ENCODE measurements at regions of chr10 and their contacts with region 1.

Region 1: GRCh38 chr10:1061930-1062774 is 6.0 kb downstream of the WDR37 start:
- DNase-seq: no peak
- H3K4me3 ChIP-seq: no peak overlapping the region
- H3K27ac ChIP-seq: no peak overlapping the region
- H3K4me1 ChIP-seq: peaks cover 7 to 17% of the 10 kb centered on the region in 2 donors
- H3K27me3 ChIP-seq: no peaks in the 10 kb centered on the region
- CTCF ChIP-seq: no peak
- POLR2A ChIP-seq: no peak

Region 2: GRCh38 chr10:844552-844951 is 217.6 kb before region 1 on chr10:
- intact Hi-C with region 1: no loop called
- DNase-seq: no peak
- H3K4me3 ChIP-seq: no peak overlapping the region
- H3K27ac ChIP-seq: peak overlapping the region in 2 of 3 donors; percentile 22 to 57
- H3K4me1 ChIP-seq: peaks cover 28 to 43% of the 10 kb centered on the region in 2 donors
- H3K27me3 ChIP-seq: no peaks in the 10 kb centered on the region
- CTCF ChIP-seq: no peak
- POLR2A ChIP-seq: no peak

Region 3: GRCh38 chr10:995559-995926 is 66.6 kb before region 1 on chr10:
- intact Hi-C with region 1: loop called (anchors 5 kb)
- DNase-seq: no peak
- H3K4me3 ChIP-seq: no peak overlapping the region
- H3K27ac ChIP-seq: no peak overlapping the region
- H3K4me1 ChIP-seq: no peaks in the 10 kb centered on the region
- H3K27me3 ChIP-seq: no peaks in the 10 kb centered on the region
- CTCF ChIP-seq: no peak
- POLR2A ChIP-seq: no peak

Region 4: DNA sequence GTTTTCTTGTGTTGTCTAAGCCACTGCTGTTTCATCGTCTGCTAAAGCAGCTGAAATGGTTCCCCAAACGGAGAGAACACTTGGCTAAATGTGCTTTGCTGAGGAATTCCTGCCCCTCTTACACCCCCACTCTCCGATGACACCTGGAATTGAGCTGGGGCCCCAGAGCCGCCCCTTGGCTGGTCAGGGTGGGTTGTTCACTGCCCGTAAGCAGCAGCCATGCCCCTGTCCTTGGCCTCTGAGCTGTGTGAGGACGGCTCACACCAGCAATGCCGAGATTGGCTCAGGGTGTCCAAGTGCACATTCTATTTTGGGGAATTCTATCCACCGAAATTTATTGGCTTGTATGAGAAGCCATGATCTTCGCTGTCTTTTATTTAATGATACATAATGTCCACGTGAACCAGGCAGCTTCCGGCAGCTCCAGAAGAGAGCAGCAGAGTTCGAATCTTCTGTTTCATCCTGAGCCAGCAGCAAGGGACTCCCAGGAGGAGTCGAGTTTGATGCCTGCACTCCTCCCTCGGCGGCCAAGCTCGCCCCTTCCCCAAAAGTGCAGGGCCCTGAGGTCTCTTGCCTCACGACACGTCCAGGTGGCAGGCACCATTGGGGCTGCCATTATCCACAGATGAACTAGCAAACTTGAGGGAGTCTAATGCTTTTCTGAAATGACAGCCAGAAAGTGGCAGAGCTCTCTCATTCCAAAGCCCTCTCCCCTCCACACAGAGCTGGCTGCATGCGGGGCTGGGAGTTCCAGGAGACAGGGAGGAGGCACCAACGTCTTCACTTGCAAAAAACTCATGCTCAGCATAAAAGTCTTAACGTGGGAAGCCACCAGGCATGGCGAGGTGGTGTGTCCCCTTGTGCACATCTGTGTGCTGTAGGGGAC is 108.1 kb after region 1 on chr10:
- intact Hi-C with region 1: no loop called
- DNase-seq: no peak
- H3K4me3 ChIP-seq: no peak overlapping the region
- H3K27ac ChIP-seq: no peak overlapping the region
- H3K4me1 ChIP-seq: no peaks in the 10 kb centered on the region
- H3K27me3 ChIP-seq: no peaks in the 10 kb centered on the region
- CTCF ChIP-seq: no peak
- POLR2A ChIP-seq: no peak

Region 5: GRCh38 chr10:1240341-1240775 is 178.2 kb after region 1 on chr10:
- intact Hi-C with region 1: no loop called
- DNase-seq: no peak
- H3K4me3 ChIP-seq: no peak overlapping the region
- H3K27ac ChIP-seq: no peak overlapping the region
- H3K4me1 ChIP-seq: no peaks in the 10 kb centered on the region
- H3K27me3 ChIP-seq: peaks cover 6% of the 10 kb centered on the region
- CTCF ChIP-seq: no peak
- POLR2A ChIP-seq: no peak

Measured in thyroid gland (tissue), 4 donors.